ENCODE measurements at regions of chr1 and their contacts with region 1.

Region 1: DNA sequence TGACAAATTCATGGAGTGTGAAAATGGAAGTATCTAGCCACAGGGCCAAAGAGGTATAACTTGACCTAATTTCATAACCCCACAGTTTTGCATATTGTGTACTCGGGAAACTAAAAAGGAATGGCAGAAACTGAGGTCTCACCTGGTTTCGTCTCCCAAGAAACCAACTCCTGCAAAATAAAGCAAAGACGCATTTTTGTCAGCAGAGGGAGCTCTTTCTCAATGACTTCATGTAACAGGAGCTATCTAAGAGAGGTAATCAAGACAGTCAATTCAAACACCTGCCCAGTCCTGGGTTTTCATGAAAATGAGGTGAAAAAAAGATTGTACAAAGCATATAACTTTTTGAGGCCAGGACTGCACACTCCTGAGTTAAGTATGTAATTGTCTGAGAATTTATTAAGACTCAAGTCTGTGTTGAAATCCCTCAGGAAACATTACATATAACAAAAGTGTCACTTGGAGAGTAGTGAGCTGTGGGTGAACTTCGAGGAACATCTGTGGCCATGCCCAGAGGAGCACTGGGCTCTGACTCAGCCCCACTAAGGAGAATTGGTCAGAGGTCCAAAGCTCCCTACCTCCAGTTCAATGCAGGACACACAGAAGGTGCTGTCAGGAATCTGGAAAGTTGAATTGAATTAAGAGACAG is 17.6 kb downstream of the FCRL4 start:
- DNase-seq: peak; percentile 53
- ATAC-seq: peak; percentile 77
- H3K4me3 ChIP-seq: no peak overlapping the region
- H3K27ac ChIP-seq: no peak overlapping the region
- H3K4me1 ChIP-seq: peaks cover 17% of the 10 kb centered on the region
- H3K27me3 ChIP-seq: peaks cover 0 to 10% of the 10 kb centered on the region in 2 experiments; a peak in 1 of 4 replicates
- CTCF ChIP-seq: peak; percentile 71 to 81 (median 78)
- EP300 ChIP-seq: no peak
- POLR2A ChIP-seq: no peak
- RAD21 ChIP-seq: peak; percentile 88

Region 2: DNA sequence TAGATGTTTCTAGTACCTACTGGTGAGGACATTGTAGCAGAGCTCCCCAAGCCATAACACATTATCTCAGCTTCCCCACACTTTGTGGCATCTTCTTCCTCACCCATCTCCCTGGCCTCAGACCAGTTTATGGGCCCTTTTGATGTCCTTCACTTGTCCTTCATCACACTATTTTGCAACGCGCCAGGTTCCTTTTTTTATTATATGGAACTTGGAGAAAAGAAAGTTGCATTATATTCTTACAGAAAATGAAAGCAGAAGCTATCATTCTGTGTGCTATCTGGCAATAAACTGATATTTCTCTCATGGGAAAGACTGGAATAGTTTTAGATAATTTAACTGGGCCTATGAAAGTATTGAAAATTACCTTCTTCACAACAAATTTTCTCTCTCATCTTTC is 245.2 kb before region 1 on chr1:
- CTCF ChIA-PET with region 1: no interaction called
- POLR2A ChIA-PET with region 1: no interaction called
- RAD21 ChIA-PET with region 1: no interaction called
- SMC1A ChIA-PET with region 1: no interaction called
- in situ Hi-C with region 1: no loop called
- intact Hi-C with region 1: no loop called
- DNase-seq: no peak
- ATAC-seq: no peak
- H3K4me3 ChIP-seq: no peak overlapping the region
- H3K27ac ChIP-seq: no peak overlapping the region
- H3K4me1 ChIP-seq: no peaks in the 10 kb centered on the region
- H3K27me3 ChIP-seq: peaks cover 0 to 3% of the 10 kb centered on the region in 2 experiments; a peak in 1 of 4 replicates
- CTCF ChIP-seq: no peak
- EP300 ChIP-seq: no peak
- POLR2A ChIP-seq: no peak
- RAD21 ChIP-seq: no peak

Region 3: DNA sequence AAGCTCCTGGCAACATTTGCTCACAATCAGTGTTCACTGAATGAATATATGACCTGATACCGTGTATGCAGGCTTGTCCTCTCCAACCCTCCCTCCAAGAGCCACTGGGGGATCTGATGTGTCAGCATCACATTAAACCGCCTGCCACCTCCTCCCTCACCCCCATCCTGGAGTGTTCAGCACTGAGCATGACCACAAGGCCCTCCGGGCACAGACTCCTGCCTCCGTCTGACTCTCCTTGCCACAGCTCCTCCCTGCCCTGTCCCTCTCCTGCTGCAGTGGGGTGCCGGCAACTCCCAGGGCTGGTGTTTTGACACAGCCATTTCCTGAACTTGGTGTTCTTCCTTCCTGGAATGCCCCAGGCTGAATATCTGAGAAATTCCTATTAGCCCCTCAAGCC is 164.6 kb before region 1 on chr1:
- CTCF ChIA-PET with region 1: no interaction called
- POLR2A ChIA-PET with region 1: no interaction called
- RAD21 ChIA-PET with region 1: no interaction called
- SMC1A ChIA-PET with region 1: no interaction called
- in situ Hi-C with region 1: no loop called
- intact Hi-C with region 1: no loop called
- DNase-seq: no peak
- ATAC-seq: no peak
- H3K4me3 ChIP-seq: no peak overlapping the region
- H3K27ac ChIP-seq: no peak overlapping the region
- H3K4me1 ChIP-seq: no peaks in the 10 kb centered on the region
- H3K27me3 ChIP-seq: peaks cover 0 to 2% of the 10 kb centered on the region in 2 experiments; a peak in 2 of 4 replicates
- CTCF ChIP-seq: no peak
- EP300 ChIP-seq: no peak
- POLR2A ChIP-seq: no peak
- RAD21 ChIP-seq: no peak

Region 4: DNA sequence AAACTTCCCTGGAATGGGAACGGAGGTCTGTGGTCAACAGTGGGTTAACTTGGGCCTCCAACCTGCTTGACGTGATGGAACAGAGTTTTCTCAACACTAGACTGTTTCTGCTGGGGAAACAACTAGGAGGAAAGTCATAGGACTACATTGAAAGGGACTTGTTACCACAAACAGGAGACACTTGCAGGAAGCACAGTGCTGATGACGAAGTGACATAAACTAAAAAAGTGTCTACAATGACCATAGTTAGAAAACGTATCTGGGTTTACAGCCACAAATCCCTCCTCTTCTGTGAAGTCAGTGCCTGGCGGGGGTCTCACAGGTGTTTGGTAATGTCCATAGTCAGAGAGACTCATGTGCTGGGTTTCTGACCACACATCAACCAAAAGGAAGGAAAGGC is 114.3 kb before region 1 on chr1:
- CTCF ChIA-PET with region 1: no interaction called
- POLR2A ChIA-PET with region 1: no interaction called
- RAD21 ChIA-PET with region 1: no interaction called
- SMC1A ChIA-PET with region 1: no interaction called
- in situ Hi-C with region 1: no loop called
- intact Hi-C with region 1: no loop called
- DNase-seq: no peak
- ATAC-seq: no peak
- H3K4me3 ChIP-seq: no peak overlapping the region
- H3K27ac ChIP-seq: no peak overlapping the region
- H3K4me1 ChIP-seq: no peaks in the 10 kb centered on the region
- H3K27me3 ChIP-seq: no peaks in the 10 kb centered on the region
- CTCF ChIP-seq: no peak
- EP300 ChIP-seq: no peak
- POLR2A ChIP-seq: no peak
- RAD21 ChIP-seq: no peak

Region 5: DNA sequence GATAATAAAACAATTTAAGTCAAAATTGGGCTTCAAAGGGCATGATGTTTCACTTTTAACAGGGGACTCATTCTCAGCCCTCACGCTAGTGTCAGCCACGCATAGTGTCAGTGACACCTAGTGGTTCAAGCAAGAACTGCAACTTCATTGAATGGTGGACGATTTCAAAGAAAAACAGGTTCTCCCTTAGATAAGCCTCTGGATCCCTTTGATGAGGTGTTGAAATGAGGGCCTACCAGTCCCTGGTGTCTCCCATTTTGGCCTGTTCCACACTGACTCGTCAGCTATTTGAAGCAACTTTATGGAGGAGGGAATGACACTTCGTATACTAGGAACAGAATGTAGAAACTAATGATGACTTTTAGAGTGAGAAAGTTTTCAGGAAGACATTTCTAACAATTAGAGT is 84.2 kb before region 1 on chr1:
- CTCF ChIA-PET with region 1: interaction called, 14 read pairs
- POLR2A ChIA-PET with region 1: no interaction called
- RAD21 ChIA-PET with region 1: interaction called, 7 read pairs
- SMC1A ChIA-PET with region 1: interaction called, 11 read pairs
- in situ Hi-C with region 1: no loop called
- intact Hi-C with region 1: no loop called
- DNase-seq: no peak
- ATAC-seq: peak; percentile 83
- H3K4me3 ChIP-seq: no peak overlapping the region
- H3K27ac ChIP-seq: no peak overlapping the region
- H3K4me1 ChIP-seq: peaks cover 4% of the 10 kb centered on the region; the same call in 1 of the 2 replicates
- H3K27me3 ChIP-seq: 0 out of 4 replicates have a peak, but pooled peaks cover 0 to 2% of the 10 kb centered on the region in 2 experiments
- CTCF ChIP-seq: peak; percentile 67 to 85 (median 81)
- EP300 ChIP-seq: no peak
- POLR2A ChIP-seq: no peak
- RAD21 ChIP-seq: peak; percentile 63

Region 6: GRCh38 chr1:157542676-157543075 is 37.6 kb before region 1 on chr1:
- CTCF ChIA-PET with region 1: interaction called, 10 read pairs
- POLR2A ChIA-PET with region 1: no interaction called
- RAD21 ChIA-PET with region 1: interaction called, 4 read pairs
- SMC1A ChIA-PET with region 1: interaction called, 6 read pairs
- in situ Hi-C with region 1: no loop called
- intact Hi-C with region 1: no loop called
- DNase-seq: no peak
- ATAC-seq: no peak
- H3K4me3 ChIP-seq: no peak overlapping the region
- H3K27ac ChIP-seq: no peak overlapping the region
- H3K4me1 ChIP-seq: peaks cover 6% of the 10 kb centered on the region; the same call in 1 of the 2 replicates
- H3K27me3 ChIP-seq: 0 out of 4 replicates have a peak, but pooled peaks cover 0 to 3% of the 10 kb centered on the region in 2 experiments
- CTCF ChIP-seq: no peak
- EP300 ChIP-seq: no peak
- POLR2A ChIP-seq: no peak
- RAD21 ChIP-seq: no peak

Region 7: GRCh38 chr1:157595356-157595755 is 15.1 kb after region 1 on chr1:
- CTCF ChIA-PET with region 1: interaction called, 51 read pairs
- POLR2A ChIA-PET with region 1: interaction called, 3 read pairs
- RAD21 ChIA-PET with region 1: interaction called, 31 read pairs
- SMC1A ChIA-PET with region 1: interaction called, 34 read pairs
- in situ Hi-C with region 1: no loop called
- intact Hi-C with region 1: no loop called
- DNase-seq: peak; percentile 78
- ATAC-seq: peak; percentile 83
- H3K4me3 ChIP-seq: no peak overlapping the region
- H3K27ac ChIP-seq: no peak overlapping the region
- H3K4me1 ChIP-seq: peaks cover 35% of the 10 kb centered on the region
- H3K27me3 ChIP-seq: no peaks in the 10 kb centered on the region
- CTCF ChIP-seq: no peak
- EP300 ChIP-seq: peak; percentile 84 to 91
- POLR2A ChIP-seq: no peak
- RAD21 ChIP-seq: no peak

Region 8: GRCh38 chr1:157691285-157691920 is 111.1 kb after region 1 on chr1:
- CTCF ChIA-PET with region 1: interaction called, 190 read pairs
- POLR2A ChIA-PET with region 1: interaction called, 9 read pairs
- RAD21 ChIA-PET with region 1: interaction called, 41 read pairs
- SMC1A ChIA-PET with region 1: interaction called, 103 read pairs
- in situ Hi-C with region 1: no loop called
- intact Hi-C with region 1: loop called (anchors 1 kb)
- DNase-seq: no peak
- ATAC-seq: peak; percentile 73
- H3K4me3 ChIP-seq: no peak overlapping the region
- H3K27ac ChIP-seq: no peak overlapping the region
- H3K4me1 ChIP-seq: no peaks in the 10 kb centered on the region
- H3K27me3 ChIP-seq: peaks cover 0 to 2% of the 10 kb centered on the region in 2 experiments; a peak in 1 of 4 replicates
- CTCF ChIP-seq: peak; percentile 58 to 73 (median 67)
- EP300 ChIP-seq: no peak
- POLR2A ChIP-seq: no peak
- RAD21 ChIP-seq: peak; percentile 59

Region 9: DNA sequence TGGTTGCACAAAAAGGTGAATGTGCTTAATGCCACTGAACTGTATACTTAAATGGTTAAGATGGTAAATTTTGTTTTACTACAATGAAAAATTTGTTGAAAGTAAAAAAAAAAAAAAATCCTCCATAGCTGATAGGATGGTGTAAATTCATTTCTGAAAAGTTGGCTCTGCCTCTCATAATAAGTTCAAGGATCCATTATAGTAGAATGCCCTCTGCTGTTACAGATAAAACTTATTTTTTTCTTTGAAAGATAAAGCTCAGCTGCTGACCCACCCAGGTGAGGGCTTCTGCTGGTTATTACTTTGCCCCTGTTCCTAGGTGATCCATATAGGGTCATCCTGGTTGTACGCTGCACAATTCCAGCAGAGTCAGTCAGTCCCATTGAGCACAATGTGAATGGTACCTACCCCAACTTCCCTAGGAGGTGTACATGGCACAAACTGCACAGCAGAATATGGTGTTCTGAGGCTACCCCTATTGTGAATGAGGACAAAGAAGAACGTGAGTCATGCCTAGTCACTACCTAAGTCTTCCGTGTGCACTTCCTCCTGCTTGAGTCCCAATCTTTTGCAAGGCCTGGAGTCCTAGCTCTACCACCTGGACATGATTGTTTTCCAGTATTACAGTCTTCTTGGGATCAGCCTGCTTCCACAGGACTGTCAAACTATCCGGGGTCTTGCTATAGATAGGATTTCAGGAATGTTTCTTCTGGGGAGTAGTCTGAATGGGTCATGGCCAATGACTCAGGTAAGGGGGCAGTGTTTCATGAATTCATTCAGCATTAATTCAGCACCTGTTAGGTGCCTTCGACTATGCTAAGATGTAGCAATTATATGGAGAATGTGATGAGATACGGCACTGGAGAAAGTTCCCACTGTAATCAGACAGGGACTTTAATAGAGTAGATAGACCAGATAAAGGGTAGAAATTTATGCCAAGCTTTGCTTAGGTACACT is 282.1 kb after region 1 on chr1:
- CTCF ChIA-PET with region 1: interaction called, 8 read pairs
- POLR2A ChIA-PET with region 1: no interaction called
- RAD21 ChIA-PET with region 1: interaction called, 8 read pairs
- SMC1A ChIA-PET with region 1: interaction called, 13 read pairs
- in situ Hi-C with region 1: no loop called
- intact Hi-C with region 1: loop called (anchors 10 kb)
- DNase-seq: no peak
- ATAC-seq: no peak
- H3K4me3 ChIP-seq: no peak overlapping the region
- H3K27ac ChIP-seq: no peak overlapping the region
- H3K4me1 ChIP-seq: no peaks in the 10 kb centered on the region
- H3K27me3 ChIP-seq: peaks cover 0 to 3% of the 10 kb centered on the region in 2 experiments; a peak in 2 of 4 replicates
- CTCF ChIP-seq: 0 out of 6 replicates have a peak, but pooled peaks of 1 of the 3 experiments have one; percentile 7
- EP300 ChIP-seq: no peak
- POLR2A ChIP-seq: no peak
- RAD21 ChIP-seq: peak; percentile 64